Activated CD4-positive, alpha-beta memory T cell treated with anti-CD3 and anti-CD28 coated beads for 36 hours (primary cell): ENCODE measurements at regions of chr13 and their contacts with region 1.

Region 1: GRCh38 chr13:110944121-110944967 is 29.5 kb upstream of the ANKRD10 start:
- DNase-seq: peak; percentile 65
- H3K4me3 Mint-ChIP-seq: no peak overlapping the region
- H3K27ac Mint-ChIP-seq: peak overlapping the region; percentile 11
- H3K4me1 Mint-ChIP-seq: peaks cover 32% of the 10 kb centered on the region
- H3K27me3 Mint-ChIP-seq: peaks cover 6% of the 10 kb centered on the region

Region 2: DNA sequence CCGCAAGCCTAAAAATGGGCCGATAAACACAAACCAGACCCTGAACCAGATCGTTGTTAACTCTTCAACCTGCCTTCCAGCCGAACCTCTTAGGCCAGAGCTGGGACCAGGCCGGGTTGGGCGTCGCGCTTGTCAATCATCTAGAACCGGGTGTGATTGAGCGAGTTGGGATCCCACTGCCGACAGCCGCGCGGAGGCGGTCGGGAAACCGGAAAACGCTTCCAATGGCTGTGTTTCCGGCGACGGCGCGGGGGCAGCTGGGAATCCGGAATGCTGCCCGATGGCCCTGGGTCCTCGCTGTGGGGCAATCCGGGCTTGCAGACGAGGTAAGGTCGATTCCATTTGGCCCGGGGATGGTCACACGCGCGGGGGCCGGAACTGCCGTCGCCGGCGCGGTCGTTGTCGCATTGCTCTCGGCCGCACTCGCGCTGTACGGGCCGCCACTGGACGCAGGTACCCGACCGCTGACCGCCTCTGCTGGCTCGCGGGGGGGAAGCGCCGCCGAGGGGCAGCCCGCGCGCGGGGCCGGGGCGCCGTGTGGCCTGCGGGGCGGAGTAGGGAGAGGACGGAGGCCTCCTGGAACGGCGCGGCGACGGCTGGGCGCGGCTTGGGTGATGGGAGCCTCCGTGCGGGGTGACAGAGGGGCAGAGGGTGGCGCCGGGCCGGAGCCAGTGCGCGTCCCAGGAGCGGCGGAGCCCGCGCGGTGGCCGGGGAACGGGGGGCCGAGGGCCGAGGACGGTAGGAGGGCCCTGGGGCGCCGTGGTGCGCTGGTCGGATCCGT is 328.8 kb before region 1 on chr13 and contains the start of gene NAXD:
- CTCF ChIA-PET with region 1: no interaction called
- POLR2A ChIA-PET with region 1: no interaction called
- intact Hi-C with region 1: loop called (anchors 10 kb)
- DNase-seq: peak; percentile 93
- H3K4me3 Mint-ChIP-seq: peak within 1 kb of the TSS; percentile 94
- H3K27ac Mint-ChIP-seq: peak within 1 kb of the TSS; percentile 88
- H3K4me1 Mint-ChIP-seq: peaks cover 48% of the 10 kb centered on the region
- H3K27me3 Mint-ChIP-seq: no peaks in the 10 kb centered on the region
- total RNA-seq, gene NAXD: 22.6 to 22.9 TPM

Region 3: DNA sequence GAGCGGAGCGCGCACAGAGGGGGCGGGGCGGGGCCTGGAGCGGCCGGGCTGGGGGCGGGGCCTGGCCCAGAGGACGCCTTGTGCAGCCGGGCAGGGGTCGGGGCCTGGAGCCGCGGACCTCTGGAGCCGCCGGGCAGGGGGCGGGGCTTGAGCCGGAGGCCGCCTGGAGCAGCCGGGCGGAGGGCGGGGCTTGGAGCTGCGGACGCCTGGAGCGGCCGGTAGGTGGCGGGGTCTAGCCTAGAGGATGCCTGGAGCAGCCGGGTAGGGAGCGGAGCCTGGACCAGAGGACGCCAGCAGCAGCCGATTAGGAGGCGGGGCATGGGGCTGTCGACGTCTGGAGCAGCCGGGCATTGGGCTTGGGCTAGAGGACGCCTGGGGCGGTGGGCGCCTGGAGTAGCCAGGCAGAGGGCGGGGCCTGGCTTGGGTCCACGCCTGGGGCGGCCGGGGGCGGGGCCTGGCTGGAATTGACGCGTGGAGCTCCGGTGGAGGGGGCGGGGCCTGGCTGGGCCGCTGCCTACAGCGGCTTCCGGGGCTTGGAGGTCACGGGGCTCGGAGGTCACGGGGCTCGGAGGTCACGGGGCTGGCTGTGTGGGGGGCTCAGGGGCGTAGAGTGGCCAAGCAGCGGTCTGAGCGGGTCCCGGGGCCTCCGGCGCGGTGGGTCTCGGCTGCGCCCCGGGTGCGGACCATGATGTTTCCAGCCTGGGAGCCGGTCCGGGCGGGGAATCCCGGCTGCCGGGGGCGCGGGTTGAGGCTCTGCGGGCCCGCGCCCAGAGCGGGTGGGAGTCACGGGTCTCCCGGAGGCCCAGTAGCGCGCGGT is 29.1 kb before region 1 on chr13 and contains the start of gene ANKRD10:
- CTCF ChIA-PET with region 1: interaction called, 10 read pairs
- POLR2A ChIA-PET with region 1: interaction called, 4 read pairs
- intact Hi-C with region 1: loop called (anchors 2 kb)
- DNase-seq: peak; percentile 98
- H3K4me3 Mint-ChIP-seq: peak within 1 kb of the TSS; percentile 87
- H3K27ac Mint-ChIP-seq: peak within 1 kb of the TSS; percentile 94
- H3K4me1 Mint-ChIP-seq: peaks cover 46% of the 10 kb centered on the region
- H3K27me3 Mint-ChIP-seq: no peaks in the 10 kb centered on the region
- total RNA-seq, gene ANKRD10: 83.9 to 97.8 TPM

Region 4: DNA sequence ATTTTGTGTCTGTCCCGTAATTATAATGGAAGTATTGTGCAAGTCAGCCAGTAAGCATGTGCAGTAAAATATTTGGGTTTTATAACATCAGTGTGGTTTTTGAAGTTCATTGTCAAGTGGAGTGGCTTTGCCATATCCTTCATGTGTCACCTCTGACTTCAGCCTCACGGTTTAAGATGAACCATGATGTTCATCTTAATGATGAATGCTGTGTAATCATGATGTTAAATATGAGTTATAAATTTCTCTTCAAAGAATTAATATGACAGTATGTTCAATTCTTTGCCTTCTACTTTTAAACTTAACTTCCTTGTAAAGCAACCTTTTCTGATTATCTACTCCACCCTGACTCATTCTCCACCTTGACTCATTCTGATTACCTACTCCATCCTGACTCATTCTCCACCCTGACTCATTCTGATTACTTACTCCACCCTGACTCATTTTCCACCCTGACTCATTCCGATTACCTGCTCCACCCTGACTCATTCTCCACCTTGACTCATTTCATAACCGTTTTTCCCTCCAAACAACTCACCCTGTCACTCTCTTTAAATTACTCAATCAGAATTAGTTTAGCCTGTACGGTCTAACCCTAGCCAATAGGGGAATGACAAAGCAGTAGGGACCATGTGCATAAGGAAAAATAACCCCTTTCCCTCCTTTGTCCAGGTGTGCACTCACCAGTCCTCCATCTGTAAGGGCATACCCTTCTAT is 20.9 kb after region 1 on chr13:
- CTCF ChIA-PET with region 1: no interaction called
- POLR2A ChIA-PET with region 1: no interaction called
- intact Hi-C with region 1: loop called (anchors 1 kb)
- DNase-seq: peak; percentile 64
- H3K4me3 Mint-ChIP-seq: peak overlapping the region; percentile 25
- H3K27ac Mint-ChIP-seq: peak overlapping the region; percentile 81
- H3K4me1 Mint-ChIP-seq: peaks cover 25% of the 10 kb centered on the region
- H3K27me3 Mint-ChIP-seq: peaks cover 6% of the 10 kb centered on the region

Region 5: DNA sequence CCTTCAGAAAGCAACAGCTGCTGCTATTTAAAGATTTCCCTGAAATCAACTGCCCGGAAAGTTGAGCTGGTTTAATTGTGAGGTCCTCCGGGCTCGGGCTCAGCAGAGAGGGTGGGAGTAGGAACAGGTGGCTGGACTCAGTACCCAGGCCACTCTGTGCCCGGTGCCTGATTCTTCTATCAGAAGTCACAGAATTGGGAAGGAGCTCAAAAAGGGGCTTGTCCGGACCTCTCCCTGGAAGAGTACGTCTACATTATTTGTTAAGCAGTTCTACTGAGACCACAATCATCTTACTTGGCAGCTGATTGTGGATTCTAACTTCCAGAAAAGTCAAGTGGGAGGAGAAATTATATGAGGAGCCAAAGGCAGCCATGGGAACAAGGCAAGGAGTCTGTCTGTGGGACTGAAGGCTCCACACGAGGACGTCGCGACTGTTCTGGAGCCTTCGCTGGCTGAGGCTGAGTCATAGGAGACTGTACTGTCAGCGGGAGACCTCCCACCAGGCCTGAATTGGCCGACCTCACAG is 62.2 kb after region 1 on chr13:
- CTCF ChIA-PET with region 1: interaction called, 3 read pairs
- POLR2A ChIA-PET with region 1: no interaction called
- intact Hi-C with region 1: loop called (anchors 2 kb)
- DNase-seq: no peak
- H3K4me3 Mint-ChIP-seq: no peak overlapping the region
- H3K27ac Mint-ChIP-seq: no peak overlapping the region
- H3K4me1 Mint-ChIP-seq: peaks cover under 1% of the 10 kb centered on the region
- H3K27me3 Mint-ChIP-seq: peaks cover 7% of the 10 kb centered on the region

Region 6: GRCh38 chr13:111049802-111050538 is 105.6 kb after region 1 on chr13:
- CTCF ChIA-PET with region 1: interaction called, 15 read pairs
- POLR2A ChIA-PET with region 1: no interaction called
- intact Hi-C with region 1: loop called (anchors 1 kb)
- DNase-seq: no peak
- H3K4me3 Mint-ChIP-seq: no peak overlapping the region
- H3K27ac Mint-ChIP-seq: no peak overlapping the region
- H3K4me1 Mint-ChIP-seq: peaks cover 7% of the 10 kb centered on the region
- H3K27me3 Mint-ChIP-seq: no peaks in the 10 kb centered on the region

Region 7: DNA sequence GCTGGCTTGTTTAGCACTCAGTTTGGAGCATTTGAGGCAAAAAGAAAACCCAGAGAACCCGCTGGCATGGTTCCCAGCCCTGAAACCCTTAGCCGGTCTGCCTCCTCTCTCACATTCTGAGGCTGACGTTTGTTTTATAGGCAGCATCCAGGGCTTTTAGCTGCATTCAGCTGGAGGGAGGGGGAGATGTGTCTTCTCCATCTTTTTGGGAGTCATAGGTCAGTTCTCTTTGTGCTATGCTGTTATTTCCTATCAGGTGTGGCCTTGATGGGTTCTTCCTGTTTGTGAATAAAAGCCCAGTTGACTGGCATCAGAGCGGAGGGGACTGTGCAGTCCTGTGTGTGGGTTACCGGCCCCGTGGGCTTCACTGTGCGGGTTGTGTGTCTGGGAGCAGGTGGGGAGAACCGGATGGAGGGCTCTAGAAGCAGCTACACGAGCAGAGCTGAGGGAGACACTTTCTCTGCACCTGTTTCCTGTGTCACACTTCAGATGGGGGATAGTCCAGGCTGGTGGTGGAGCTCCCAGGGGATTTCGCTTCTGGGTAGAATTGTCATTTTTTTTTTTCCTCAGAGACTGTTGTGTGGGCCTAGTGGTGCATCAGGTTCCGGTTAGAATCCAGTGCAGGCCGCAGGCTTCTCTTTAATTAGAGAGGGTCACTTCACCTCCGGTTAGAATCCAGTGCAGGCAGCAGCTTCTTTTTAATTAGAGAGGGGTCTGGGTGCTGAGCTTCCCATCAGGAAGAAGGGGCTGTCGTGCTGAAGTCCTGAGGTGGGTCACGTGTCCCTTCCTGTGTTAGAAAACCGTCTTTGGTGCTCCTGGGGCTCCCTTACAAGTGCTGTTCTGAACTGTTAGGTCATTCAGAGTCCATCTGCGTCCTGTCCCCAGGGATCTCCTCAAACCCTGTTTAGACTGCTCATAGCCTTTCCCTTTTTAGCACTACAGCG is 240.4 kb after region 1 on chr13:
- CTCF ChIA-PET with region 1: no interaction called
- POLR2A ChIA-PET with region 1: interaction called, 3 read pairs
- intact Hi-C with region 1: loop called (anchors 10 kb)
- DNase-seq: peak; percentile 60
- H3K4me3 Mint-ChIP-seq: peak overlapping the region; percentile 48
- H3K27ac Mint-ChIP-seq: peak overlapping the region; percentile 80
- H3K4me1 Mint-ChIP-seq: peaks cover 88% of the 10 kb centered on the region
- H3K27me3 Mint-ChIP-seq: no peaks in the 10 kb centered on the region